ENCODE measurements at regions of chr20 and their contacts with region 1.

Region 1: DNA sequence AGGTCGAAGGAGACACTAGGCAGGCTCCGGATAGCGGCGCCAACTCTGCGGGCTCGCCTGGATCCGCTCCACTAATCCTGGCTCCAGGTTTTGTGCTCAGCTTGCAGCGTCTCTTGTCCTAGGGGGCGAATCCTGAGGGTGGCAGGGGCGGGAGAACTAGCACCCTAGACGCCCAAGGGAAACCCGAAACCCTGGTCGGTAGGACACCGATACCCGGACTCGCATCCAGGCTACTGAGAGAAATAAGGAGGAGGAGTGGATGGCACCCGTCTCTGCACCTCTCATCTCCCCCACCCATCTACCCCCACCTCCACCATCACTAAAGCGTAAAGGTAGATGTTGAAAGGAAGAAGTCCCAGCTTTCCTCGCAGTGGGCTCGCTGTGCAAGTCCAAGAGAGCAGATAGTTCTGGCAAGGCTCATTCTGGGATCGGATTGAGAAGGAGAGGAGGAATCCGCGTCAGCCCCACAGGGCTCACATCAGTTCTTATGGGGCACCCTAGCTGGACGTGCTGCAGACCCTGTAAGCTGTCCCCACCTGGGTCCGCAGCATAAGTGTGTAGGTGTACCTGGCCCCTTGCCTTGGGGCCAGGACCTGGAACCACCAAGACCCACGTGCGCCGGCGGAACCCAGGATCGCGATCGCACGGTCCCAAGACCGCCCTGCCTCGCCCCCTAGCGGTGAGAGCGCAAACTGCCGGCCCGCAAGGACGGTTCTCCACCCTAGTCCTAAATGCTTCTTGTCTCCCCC is 6.9 kb downstream of the SLC32A1 start:
- DNase-seq: no peak
- H3K4me3 ChIP-seq: no peak overlapping the region
- H3K27me3 ChIP-seq: peaks cover 56% of the 10 kb centered on the region
- CTCF ChIP-seq: peak; percentile 97

Region 2: DNA sequence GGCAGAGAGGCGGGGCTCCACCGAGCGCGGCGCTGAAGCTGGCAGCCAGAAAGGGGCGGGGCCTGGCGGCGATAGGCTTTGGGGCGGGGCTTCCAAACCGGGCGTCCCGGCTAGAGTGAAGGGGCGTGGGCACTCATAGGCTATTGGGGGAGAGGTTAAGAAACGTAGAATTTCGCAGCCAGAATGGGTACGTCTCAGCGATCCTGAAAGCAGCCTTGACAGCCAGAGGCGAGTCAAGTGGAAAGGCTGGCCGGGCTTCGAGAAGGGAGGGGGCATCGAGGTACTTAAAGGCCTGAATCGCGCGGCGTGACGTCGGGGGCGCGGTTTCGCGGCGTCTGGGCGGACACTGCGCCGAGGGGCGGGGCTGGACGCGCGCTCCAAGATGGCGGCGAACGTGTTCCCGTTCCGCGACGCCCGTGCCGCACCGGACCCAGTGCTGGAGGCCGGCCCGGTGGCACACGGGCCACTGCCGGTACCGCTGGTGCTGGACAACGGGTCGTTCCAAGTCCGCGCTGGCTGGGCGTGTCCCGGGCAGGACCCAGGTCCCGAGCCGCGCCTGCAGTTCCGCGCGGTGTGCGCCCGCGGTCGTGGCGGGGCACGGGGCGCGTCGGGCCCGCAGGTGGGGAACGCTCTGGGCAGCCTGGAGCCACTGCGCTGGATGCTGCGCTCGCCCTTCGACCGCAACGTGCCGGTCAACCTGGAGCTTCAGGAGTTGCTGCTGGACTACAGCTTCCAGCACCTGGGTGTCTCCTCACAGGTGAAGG is 17.1 kb after region 1 on chr20 and contains the start of gene ACTR5:
- CTCF ChIA-PET with region 1: interaction called, 14 read pairs
- POLR2A ChIA-PET with region 1: no interaction called
- DNase-seq: peak; percentile 46
- H3K4me3 ChIP-seq: peak within 1 kb of the TSS; percentile 63
- H3K27me3 ChIP-seq: peaks cover 2% of the 10 kb centered on the region
- CTCF ChIP-seq: no peak
- polyA plus RNA-seq, gene ACTR5: 4.0 and 5.4 TPM in 2 replicates

Region 3: DNA sequence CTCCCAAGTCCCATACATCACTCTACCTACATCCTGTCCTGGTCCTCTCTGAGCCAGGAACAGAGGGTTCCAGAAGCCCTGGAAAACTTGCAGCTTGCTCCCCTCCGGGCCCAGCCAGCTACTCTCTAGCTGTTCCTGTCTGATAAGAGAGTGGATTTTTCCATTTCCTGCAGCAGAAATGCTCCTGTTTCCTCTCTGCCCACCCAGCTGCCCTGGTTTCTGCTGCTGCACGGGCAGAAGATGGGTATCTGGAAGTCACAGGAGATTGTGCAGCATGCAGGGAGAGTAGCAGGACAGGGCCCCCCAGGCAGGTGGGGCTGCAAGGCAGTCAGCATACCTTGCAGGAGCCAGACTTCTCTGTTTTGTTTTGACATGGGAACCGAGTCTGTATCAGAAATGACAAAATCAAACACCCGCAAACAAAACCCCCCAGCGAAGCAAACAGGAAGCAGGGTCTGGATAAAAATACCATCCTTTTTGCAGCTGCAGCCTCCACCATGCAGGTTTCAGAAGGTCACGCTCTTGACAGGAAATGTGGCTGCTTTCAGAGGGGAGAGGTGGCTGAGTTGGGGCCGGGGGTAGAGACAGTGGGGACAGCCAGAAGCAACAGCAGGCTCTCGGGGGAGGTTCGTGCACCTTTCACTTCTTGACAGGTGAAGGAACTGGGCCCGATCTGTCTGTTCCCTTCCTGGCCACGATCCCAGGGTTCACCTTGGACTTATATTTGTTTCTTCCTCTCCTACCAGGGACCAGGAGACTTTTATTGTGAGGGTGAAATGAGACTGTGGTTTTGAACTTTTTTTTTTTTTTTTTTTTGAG is 144.2 kb after region 1 on chr20:
- CTCF ChIA-PET with region 1: no interaction called
- POLR2A ChIA-PET with region 1: no interaction called
- DNase-seq: no peak
- H3K4me3 ChIP-seq: no peak overlapping the region
- H3K27me3 ChIP-seq: no peaks in the 10 kb centered on the region; the same call in none of the 2 replicates
- CTCF ChIP-seq: no peak